GM12878 (cell line): ENCODE measurements at regions of chr4 and their contacts with region 1.

Region 1: DNA sequence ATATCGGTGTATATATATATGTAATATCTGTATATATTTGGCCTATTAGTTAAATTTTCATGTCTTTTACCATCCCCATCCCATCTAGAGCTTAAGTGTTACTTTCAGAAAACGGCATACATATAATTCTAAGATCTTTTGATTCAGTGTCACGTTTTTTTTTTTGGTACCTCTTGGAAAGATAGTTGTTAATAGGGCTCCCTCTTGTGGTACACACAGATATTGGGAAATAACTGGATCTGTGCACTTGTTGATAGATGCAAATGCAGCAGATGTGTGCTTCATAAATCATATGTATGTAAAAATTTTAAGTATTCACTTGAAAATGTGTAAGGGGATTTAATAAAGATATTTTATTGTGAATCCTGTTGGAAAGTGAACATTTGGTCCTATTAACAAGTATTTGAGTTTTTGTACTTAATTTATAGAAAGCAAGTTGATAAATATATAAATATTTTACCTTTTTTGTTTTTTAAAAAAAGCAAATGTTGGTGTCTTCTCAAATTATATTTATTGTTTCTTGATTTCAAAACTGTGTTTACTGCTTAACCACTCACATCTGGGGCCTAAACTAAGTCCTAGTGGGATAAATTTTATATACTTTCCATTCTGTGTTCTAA is 74.7 kb downstream of the PAQR3 start:
- DNase-seq: peak; percentile 44
- ATAC-seq: peak; percentile 80
- H3K4me3 ChIP-seq: no peak overlapping the region
- H3K27ac ChIP-seq: no peak overlapping the region
- H3K4me1 ChIP-seq: peaks cover 7% of the 10 kb centered on the region
- H3K27me3 ChIP-seq: no peaks in the 10 kb centered on the region
- CTCF ChIP-seq: peak; percentile 60 to 77 (median 60); a peak in 5 of 6 replicates
- EP300 ChIP-seq: no peak
- POLR2A ChIP-seq: no peak
- RAD21 ChIP-seq: peak; percentile 96

Region 2: DNA sequence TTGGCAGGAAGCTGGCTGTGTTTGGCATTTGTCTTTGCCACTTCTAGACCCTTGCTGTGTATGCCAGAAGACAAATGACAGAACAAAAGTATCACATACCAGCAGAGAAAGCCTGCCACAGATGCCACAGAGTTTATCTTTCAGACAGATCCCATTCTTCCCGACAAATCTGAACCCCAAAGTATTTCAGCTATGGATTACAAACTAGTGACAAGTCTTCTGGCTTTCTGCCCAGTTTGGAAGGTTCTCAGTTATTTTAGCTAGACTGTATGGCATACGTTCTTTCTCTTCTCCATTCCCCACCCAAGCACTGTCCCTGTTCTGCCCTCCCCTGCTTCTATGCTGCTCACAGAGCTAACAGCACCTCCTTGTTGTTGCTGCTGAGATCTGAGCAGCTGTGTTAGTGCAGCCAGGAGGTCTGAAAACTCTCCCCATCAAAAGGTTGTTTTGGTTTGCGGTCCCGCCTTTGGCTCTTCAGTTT is 570.7 kb before region 1 on chr4:
- CTCF ChIA-PET with region 1: no interaction called
- POLR2A ChIA-PET with region 1: no interaction called
- RAD21 ChIA-PET with region 1: no interaction called
- SMC1A ChIA-PET with region 1: no interaction called
- in situ Hi-C with region 1: no loop called
- intact Hi-C with region 1: loop called (anchors 10 kb)
- DNase-seq: no peak
- ATAC-seq: no peak
- H3K4me3 ChIP-seq: no peak overlapping the region
- H3K27ac ChIP-seq: no peak overlapping the region
- H3K4me1 ChIP-seq: peaks cover 8% of the 10 kb centered on the region; the same call in 1 of the 2 replicates
- H3K27me3 ChIP-seq: no peaks in the 10 kb centered on the region
- CTCF ChIP-seq: no peak
- EP300 ChIP-seq: no peak
- POLR2A ChIP-seq: no peak
- RAD21 ChIP-seq: no peak

Region 3: GRCh38 chr4:78601013-78601412 is 263.5 kb before region 1 on chr4:
- CTCF ChIA-PET with region 1: interaction called, 15 read pairs
- POLR2A ChIA-PET with region 1: no interaction called
- RAD21 ChIA-PET with region 1: interaction called, 4 read pairs
- SMC1A ChIA-PET with region 1: interaction called, 18 read pairs
- in situ Hi-C with region 1: no loop called
- intact Hi-C with region 1: no loop called
- DNase-seq: peak; percentile 63
- ATAC-seq: peak; percentile 92
- H3K4me3 ChIP-seq: no peak overlapping the region
- H3K27ac ChIP-seq: no peak overlapping the region
- H3K4me1 ChIP-seq: no peaks in the 10 kb centered on the region
- H3K27me3 ChIP-seq: no peaks in the 10 kb centered on the region
- CTCF ChIP-seq: peak in 1 of 3 experiments; percentile 16; a peak in 1 of 6 replicates
- EP300 ChIP-seq: peak; percentile 44 to 83; a peak in 3 of 4 replicates
- POLR2A ChIP-seq: no peak
- RAD21 ChIP-seq: no peak

Region 4: DNA sequence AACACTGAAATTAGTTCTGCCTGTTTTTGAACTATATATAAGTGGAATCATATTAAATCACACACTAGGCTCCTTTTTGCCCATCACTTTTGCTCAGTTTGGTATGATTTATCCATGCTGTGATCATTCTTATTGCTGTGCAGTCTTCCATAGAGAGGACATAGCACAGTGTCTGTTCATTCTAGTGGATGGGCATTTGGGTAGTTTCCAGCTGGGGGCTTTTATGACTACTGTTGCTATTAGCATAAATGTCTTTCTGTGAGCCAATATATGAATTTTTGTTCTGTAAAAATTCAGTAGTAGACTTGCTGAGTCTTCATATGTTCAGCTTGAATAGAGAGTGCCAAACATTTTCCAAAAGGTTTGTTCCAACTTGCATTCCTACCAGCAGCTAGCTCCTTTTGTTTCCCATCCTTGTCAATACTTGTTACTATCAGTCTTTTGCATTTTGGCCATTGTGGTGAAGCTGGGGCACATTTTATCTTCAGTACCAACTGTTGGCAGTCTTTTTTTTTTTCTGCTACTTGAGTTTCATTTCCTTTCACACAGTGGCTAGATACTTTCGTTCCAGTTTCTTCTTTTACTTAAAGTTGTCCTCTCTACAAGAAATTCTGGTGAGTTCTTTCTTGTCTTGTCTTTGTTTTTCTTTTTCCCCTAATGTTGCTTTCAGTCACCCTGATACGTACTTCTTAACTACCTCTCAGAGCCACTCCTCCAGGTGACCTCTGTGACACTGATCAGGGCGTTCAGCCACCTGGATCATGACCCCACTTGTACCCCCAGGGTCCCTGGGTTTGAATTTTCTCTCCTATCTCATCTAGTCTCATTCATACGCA is 226.0 kb before region 1 on chr4:
- CTCF ChIA-PET with region 1: interaction called, 57 read pairs
- POLR2A ChIA-PET with region 1: interaction called, 5 read pairs
- RAD21 ChIA-PET with region 1: interaction called, 15 read pairs
- SMC1A ChIA-PET with region 1: interaction called, 74 read pairs
- in situ Hi-C with region 1: no loop called
- intact Hi-C with region 1: no loop called
- DNase-seq: peak; percentile 86
- ATAC-seq: peak; percentile 78
- H3K4me3 ChIP-seq: no peak overlapping the region; the same call in 1 of the 2 replicates
- H3K27ac ChIP-seq: peak overlapping the region; percentile 62
- H3K4me1 ChIP-seq: peaks cover 57% of the 10 kb centered on the region
- H3K27me3 ChIP-seq: no peaks in the 10 kb centered on the region
- CTCF ChIP-seq: no peak
- EP300 ChIP-seq: peak; percentile 79; a peak in 3 of 4 replicates
- POLR2A ChIP-seq: no peak
- RAD21 ChIP-seq: no peak

Region 5: DNA sequence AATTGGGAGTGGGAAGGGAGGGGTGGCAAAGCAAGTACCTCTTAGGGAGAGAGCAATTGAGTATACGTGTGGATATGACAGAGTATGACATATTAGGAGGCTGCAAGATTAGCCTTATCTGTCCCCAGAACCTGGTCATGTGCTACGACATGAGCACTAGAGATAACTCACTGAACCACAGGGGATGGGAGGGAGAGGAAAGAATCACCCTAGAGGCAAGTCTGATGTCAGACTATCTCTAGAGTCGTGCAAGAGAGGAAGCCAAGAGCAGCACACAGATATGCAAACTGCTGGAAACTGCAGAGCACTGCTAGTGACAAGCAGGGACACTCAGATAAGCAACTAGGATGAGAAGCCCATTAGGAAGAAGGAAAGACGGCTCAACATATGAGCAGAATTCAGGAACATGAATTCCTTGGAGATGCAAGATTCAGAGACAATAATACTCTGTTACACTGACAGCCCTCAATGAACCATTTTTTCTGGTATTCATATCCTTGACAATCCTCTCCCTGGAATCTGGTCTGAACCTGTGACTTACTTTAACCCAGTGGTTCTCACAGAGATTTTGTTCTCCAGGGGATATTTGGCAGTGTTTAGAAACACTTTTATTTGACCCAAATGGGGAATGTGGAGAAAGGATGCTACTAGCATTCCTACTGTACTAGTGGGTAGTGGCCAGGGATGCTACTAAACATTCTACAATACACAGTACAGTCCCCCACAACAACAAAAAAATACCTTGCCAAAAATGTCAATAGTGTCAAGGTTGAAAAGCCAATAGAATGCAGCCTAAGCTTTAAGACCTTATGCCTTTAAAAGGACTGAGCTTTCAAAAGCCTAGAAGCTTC is 172.3 kb before region 1 on chr4:
- CTCF ChIA-PET with region 1: no interaction called
- POLR2A ChIA-PET with region 1: no interaction called
- RAD21 ChIA-PET with region 1: no interaction called
- SMC1A ChIA-PET with region 1: no interaction called
- in situ Hi-C with region 1: no loop called
- intact Hi-C with region 1: no loop called
- DNase-seq: no peak
- ATAC-seq: peak; percentile 77
- H3K4me3 ChIP-seq: no peak overlapping the region
- H3K27ac ChIP-seq: no peak overlapping the region
- H3K4me1 ChIP-seq: 0 out of 2 replicates have a peak, but pooled peaks cover 5% of the 10 kb centered on the region
- H3K27me3 ChIP-seq: no peaks in the 10 kb centered on the region
- CTCF ChIP-seq: no peak
- EP300 ChIP-seq: no peak
- POLR2A ChIP-seq: no peak
- RAD21 ChIP-seq: no peak

Region 6: DNA sequence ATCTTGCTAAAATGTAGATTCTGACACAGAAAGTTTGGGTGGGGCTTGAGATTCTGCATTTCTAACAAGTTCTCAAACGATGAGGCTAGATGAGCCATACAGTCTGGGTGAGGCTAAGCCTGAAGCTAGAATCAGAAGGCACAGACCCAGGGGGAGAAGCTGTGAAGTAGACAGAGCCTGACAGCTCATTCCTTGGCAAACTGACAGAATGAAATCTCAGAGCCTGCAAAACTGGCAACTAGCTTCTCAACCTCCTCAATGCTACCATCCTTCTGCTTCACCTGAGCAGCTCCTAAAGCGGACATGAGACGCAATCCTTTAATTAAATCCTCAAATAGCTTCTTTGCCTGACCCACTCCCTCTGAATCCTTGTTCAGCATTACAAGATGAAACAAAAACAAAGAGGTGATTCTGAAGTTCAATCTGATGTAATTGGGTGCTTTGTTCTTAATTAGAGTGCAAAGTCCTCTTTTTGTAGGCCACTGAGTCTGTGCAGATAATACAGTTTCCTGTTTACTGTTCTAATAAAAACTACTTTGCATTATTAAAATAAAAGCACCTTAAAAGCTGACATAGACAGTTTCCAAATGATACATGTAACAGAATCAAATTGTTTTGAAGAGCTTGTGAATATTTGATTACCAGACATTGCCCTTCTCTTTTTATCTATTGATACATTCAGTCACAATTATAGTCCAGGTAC is 159.4 kb before region 1 on chr4:
- CTCF ChIA-PET with region 1: interaction called, 3 read pairs
- POLR2A ChIA-PET with region 1: interaction called, 3 read pairs
- RAD21 ChIA-PET with region 1: interaction called, 6 read pairs
- SMC1A ChIA-PET with region 1: interaction called, 10 read pairs
- in situ Hi-C with region 1: no loop called
- intact Hi-C with region 1: no loop called
- DNase-seq: no peak
- ATAC-seq: peak; percentile 40
- H3K4me3 ChIP-seq: no peak overlapping the region
- H3K27ac ChIP-seq: no peak overlapping the region
- H3K4me1 ChIP-seq: peaks cover 24% of the 10 kb centered on the region
- H3K27me3 ChIP-seq: no peaks in the 10 kb centered on the region
- CTCF ChIP-seq: no peak
- EP300 ChIP-seq: no peak
- POLR2A ChIP-seq: no peak
- RAD21 ChIP-seq: no peak

Region 7: DNA sequence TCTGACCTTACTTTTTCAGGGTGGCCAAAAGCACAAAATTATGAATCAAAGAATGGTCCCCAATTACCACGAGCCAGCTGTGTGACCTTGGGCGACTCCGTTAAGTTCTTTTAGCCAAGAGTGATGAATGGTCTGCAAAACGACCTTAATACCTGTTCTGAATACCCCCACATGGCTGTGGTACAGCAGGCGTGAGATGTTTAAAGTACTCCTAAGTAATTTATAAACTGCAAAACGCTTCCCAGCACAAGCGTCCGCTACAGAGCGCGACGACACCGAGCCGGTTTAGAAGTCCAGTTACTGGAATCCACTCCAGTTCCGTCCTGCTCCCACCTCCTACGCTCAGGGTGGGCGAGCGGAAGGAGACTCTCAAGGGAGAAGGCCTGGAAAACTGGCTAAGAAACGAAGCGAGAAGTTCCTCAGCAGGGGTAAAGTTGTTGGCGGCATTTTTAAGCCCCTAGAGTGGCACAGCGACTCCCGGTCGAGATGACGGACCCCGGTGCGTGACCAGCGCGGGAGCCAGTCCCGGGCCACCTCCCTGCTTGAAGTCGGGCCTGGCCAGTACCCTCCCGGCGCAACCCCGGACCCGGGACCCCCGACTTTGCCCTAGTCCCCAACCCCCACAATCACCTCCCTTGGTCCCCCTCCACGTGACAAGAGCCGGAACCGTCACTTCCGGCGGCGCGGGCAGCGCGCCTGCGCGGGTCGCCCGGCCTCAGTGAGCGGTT is 89.0 kb before region 1 on chr4:
- CTCF ChIA-PET with region 1: interaction called, 11 read pairs
- POLR2A ChIA-PET with region 1: interaction called, 4 read pairs
- RAD21 ChIA-PET with region 1: interaction called, 12 read pairs
- SMC1A ChIA-PET with region 1: interaction called, 25 read pairs
- in situ Hi-C with region 1: no loop called
- intact Hi-C with region 1: loop called (anchors 2 kb)
- DNase-seq: no peak
- ATAC-seq: peak; percentile 65
- H3K4me3 ChIP-seq: peak overlapping the region; percentile 99
- H3K27ac ChIP-seq: peak overlapping the region; percentile 80
- H3K4me1 ChIP-seq: peaks cover 20% of the 10 kb centered on the region
- H3K27me3 ChIP-seq: no peaks in the 10 kb centered on the region
- CTCF ChIP-seq: no peak
- EP300 ChIP-seq: peak in 1 of 2 experiments; percentile 58; a peak in 1 of 4 replicates
- POLR2A ChIP-seq: no peak
- RAD21 ChIP-seq: no peak

Region 8: DNA sequence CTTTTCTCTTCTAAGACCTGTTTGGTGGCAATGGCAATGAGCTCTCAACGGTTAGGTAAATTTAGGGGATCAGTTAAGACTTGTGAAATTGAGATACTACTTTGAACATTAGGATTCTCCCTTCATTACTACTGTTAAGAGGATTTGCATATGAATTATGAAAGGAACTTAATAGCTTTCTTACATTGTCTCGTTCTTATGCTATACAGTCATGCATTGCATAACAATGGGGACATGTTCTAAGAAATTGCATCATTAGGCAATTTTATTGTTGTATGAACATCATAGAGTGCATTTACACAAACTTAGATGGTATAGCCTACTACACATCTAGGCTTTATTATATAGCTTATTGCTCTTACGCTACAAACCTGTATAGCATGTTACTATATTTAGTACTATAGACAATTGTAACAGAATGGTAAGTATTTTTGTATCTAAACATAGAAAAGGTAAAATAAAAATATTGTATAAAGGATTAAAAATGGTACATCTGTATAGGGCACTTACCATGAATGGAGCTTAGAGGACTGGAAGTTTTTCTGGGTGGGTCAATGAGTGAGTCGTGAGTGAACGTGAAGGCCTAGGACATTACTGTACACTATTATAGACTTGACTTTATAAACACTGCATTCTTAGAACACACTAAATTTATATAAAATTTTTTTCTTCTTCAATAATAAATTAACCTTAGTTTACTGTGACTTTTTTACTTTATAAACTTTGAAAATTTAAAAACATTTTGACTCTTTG is 12.2 kb after region 1 on chr4:
- CTCF ChIA-PET with region 1: interaction called, 14 read pairs
- POLR2A ChIA-PET with region 1: no interaction called
- RAD21 ChIA-PET with region 1: interaction called, 4 read pairs
- SMC1A ChIA-PET with region 1: interaction called, 8 read pairs
- in situ Hi-C with region 1: no loop called
- intact Hi-C with region 1: no loop called
- DNase-seq: no peak
- ATAC-seq: no peak
- H3K4me3 ChIP-seq: no peak overlapping the region
- H3K27ac ChIP-seq: no peak overlapping the region
- H3K4me1 ChIP-seq: no peaks in the 10 kb centered on the region
- H3K27me3 ChIP-seq: no peaks in the 10 kb centered on the region
- CTCF ChIP-seq: no peak
- EP300 ChIP-seq: no peak
- POLR2A ChIP-seq: no peak
- RAD21 ChIP-seq: no peak

Region 9: DNA sequence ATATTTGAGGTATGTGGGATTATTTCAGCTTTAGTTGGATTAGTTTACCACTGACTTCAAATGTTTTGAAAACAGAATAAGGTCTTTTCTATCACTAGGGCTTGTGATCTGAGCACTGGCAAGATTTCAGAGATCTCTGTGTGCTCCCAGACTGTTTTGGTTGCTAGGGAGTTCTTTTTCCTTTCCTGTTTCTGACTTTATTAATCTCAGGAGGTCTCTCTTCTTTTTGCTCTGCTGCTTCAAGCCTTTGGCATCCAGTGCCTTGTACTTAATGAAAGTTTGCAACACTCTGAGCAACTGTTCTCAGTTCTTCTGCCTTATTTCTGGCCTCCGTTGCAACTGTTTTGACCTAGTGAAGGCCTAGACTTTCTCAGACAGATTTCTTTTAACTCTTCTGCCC is 106.8 kb after region 1 on chr4:
- CTCF ChIA-PET with region 1: no interaction called
- POLR2A ChIA-PET with region 1: no interaction called
- RAD21 ChIA-PET with region 1: no interaction called
- SMC1A ChIA-PET with region 1: no interaction called
- in situ Hi-C with region 1: no loop called
- intact Hi-C with region 1: no loop called
- DNase-seq: no peak
- ATAC-seq: no peak
- H3K4me3 ChIP-seq: no peak overlapping the region
- H3K27ac ChIP-seq: no peak overlapping the region
- H3K4me1 ChIP-seq: no peaks in the 10 kb centered on the region
- H3K27me3 ChIP-seq: no peaks in the 10 kb centered on the region
- CTCF ChIP-seq: no peak
- EP300 ChIP-seq: no peak
- POLR2A ChIP-seq: no peak
- RAD21 ChIP-seq: no peak